ENCODE measurements at regions of chr18 and their contacts with region 1.

Region 1: DNA sequence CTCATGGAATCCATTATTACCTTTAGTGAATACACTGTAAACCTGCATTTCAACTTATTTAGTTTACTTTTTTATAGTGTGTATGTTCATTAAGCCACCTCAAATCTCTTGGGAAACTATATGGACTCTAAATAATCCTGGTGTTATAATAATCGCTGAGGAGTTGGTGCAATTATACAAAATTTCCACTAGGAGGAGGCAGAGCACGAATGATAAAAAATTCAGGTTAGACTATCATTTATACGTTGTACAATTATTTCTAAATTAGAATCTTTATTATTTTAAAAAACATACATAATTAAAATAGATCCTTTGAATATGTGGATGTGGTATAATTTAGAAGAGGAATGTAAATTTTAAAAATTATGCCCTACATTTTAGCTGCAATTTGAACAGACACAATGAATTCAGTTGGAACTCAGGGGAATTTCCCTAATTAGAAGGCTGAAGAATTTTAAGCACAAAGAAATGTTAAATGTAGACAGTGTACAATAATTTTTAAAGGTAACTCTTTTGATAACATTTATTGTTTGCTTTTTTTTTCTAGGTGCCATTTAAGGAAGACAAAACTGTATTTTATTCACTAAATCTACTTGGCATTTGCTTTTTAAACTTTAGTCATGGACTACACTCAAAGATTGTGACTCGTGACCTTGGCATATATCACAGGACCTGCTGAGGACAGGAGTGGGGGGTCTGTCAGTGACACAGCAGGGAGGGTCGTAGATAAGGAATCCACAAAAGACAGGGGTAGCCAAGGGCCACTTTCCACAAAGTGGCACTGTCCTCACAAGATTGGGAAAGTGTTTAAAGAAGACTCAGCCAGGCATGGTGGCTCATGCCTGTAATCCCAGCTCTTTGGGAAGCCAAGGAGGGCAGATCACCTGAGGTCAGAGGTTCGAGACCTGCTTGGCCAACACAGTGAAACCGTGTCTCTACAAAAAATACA is 45.5 kb downstream of the RAB12 start:
- DNase-seq: no peak
- ATAC-seq: peak; percentile 47; the same call in 1 of the 3 replicates
- H3K4me3 ChIP-seq: no peak overlapping the region
- H3K27ac ChIP-seq: no peak overlapping the region
- H3K4me1 ChIP-seq: no peaks in the 10 kb centered on the region
- H3K27me3 ChIP-seq: no peaks in the 10 kb centered on the region; a peak in 1 of 4 replicates
- CTCF ChIP-seq: peak; percentile 51 to 71 (median 70); a peak in 5 of 6 replicates
- EP300 ChIP-seq: no peak
- POLR2A ChIP-seq: no peak
- RAD21 ChIP-seq: peak; percentile 81

Region 2: DNA sequence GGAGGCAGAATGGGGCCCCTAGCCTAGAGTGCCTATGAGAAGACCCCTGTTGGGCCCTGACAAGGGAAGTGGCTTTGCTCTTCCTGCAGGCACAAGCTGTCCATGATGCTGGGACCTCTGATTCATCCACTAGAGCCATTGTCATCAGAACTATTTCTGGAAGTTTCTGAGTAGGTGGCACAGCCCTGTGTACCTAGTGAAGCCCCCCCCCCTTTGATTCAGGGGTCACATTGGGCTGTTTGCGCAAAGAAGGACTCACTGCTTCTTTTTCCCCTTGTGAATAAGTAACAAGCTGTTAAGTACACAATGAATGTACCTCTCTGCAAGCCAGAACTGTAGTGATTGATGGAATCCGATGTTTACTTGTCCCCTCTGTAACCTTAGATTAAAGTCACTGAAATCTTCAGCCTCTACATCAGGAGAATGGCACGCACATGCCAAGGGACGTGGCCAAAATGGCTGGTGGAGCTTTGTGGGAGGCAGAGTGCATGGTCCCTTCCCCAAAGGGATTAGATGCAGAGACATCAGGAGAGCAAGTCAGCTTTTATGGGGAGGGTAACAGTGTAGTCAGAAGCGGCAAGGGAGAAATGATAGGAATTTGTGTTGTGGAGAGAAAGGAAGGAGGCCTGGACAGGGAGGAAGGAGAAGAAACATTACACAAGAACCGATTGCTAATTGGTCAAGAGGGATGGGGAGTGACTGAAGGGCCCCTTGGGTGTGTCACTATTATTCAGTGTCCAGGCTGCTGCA is 313.1 kb before region 1 on chr18:
- CTCF ChIA-PET with region 1: no interaction called
- POLR2A ChIA-PET with region 1: no interaction called
- RAD21 ChIA-PET with region 1: no interaction called
- SMC1A ChIA-PET with region 1: no interaction called
- in situ Hi-C with region 1: no loop called
- intact Hi-C with region 1: no loop called
- DNase-seq: no peak
- ATAC-seq: no peak
- H3K4me3 ChIP-seq: no peak overlapping the region
- H3K27ac ChIP-seq: no peak overlapping the region
- H3K4me1 ChIP-seq: no peaks in the 10 kb centered on the region
- H3K27me3 ChIP-seq: no peaks in the 10 kb centered on the region; a peak in 1 of 4 replicates
- CTCF ChIP-seq: no peak
- EP300 ChIP-seq: no peak
- POLR2A ChIP-seq: no peak
- RAD21 ChIP-seq: no peak

Region 3: GRCh38 chr18:8643326-8643878 is 11.4 kb before region 1 on chr18:
- CTCF ChIA-PET with region 1: interaction called, 29 read pairs
- POLR2A ChIA-PET with region 1: interaction called, 5 read pairs
- RAD21 ChIA-PET with region 1: interaction called, 3 read pairs
- SMC1A ChIA-PET with region 1: interaction called, 6 read pairs
- in situ Hi-C with region 1: no loop called
- intact Hi-C with region 1: no loop called
- DNase-seq: no peak
- ATAC-seq: no peak
- H3K4me3 ChIP-seq: no peak overlapping the region
- H3K27ac ChIP-seq: no peak overlapping the region
- H3K4me1 ChIP-seq: no peaks in the 10 kb centered on the region
- H3K27me3 ChIP-seq: no peaks in the 10 kb centered on the region
- CTCF ChIP-seq: no peak
- EP300 ChIP-seq: no peak
- POLR2A ChIP-seq: no peak
- RAD21 ChIP-seq: no peak

Region 4: DNA sequence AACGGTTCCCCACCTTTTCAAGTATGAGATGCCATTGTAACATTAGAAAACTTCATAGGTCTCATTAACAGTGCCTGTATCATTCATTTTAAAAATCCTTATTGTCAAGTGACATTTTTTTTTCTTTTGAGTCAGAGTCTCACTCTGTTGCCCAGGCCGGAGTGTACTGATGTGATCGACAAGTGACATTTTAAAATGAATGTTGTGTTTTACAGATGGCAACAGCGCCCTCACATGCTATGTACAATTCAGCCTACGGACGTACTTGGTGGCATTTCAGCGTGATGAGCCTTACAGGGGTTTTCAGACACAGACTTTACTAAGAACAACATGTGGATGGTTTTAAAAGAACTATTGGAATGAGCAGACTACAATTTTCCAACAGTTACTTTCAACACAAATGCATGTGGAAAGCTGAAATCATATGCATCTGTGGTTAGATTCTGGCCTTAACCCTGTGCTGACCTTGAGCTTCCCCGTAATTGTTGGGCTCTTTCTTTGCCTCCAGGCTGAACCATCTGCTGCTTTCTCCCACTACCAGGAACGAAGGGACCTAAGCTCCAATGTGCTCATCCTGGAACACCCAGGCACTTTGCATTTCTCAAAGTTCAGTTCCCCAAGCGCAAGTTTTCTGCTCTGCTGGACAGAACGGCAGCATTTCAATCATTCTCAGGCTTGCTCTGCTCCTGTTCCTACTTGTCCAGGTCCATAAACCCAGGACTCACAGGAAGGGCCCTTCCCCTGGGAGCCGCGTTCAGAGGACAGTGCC is 327.8 kb after region 1 on chr18:
- CTCF ChIA-PET with region 1: interaction called, 62 read pairs
- POLR2A ChIA-PET with region 1: no interaction called
- RAD21 ChIA-PET with region 1: interaction called, 15 read pairs
- SMC1A ChIA-PET with region 1: interaction called, 27 read pairs
- in situ Hi-C with region 1: loop called (anchors 5 kb)
- intact Hi-C with region 1: no loop called
- DNase-seq: no peak
- ATAC-seq: peak; percentile 72
- H3K4me3 ChIP-seq: no peak overlapping the region
- H3K27ac ChIP-seq: no peak overlapping the region
- H3K4me1 ChIP-seq: no peaks in the 10 kb centered on the region
- H3K27me3 ChIP-seq: no peaks in the 10 kb centered on the region
- CTCF ChIP-seq: peak; percentile 21 to 66 (median 42); a peak in 4 of 6 replicates
- EP300 ChIP-seq: no peak
- POLR2A ChIP-seq: no peak
- RAD21 ChIP-seq: peak; percentile 75

Region 5: GRCh38 chr18:9048808-9049494 is 394.2 kb after region 1 on chr18:
- CTCF ChIA-PET with region 1: no interaction called
- POLR2A ChIA-PET with region 1: no interaction called
- RAD21 ChIA-PET with region 1: no interaction called
- SMC1A ChIA-PET with region 1: no interaction called
- in situ Hi-C with region 1: no loop called
- intact Hi-C with region 1: no loop called
- DNase-seq: no peak
- ATAC-seq: peak; percentile 60
- H3K4me3 ChIP-seq: no peak overlapping the region
- H3K27ac ChIP-seq: no peak overlapping the region
- H3K4me1 ChIP-seq: no peaks in the 10 kb centered on the region
- H3K27me3 ChIP-seq: no peaks in the 10 kb centered on the region
- CTCF ChIP-seq: no peak
- EP300 ChIP-seq: no peak
- POLR2A ChIP-seq: no peak
- RAD21 ChIP-seq: no peak

Region 6: DNA sequence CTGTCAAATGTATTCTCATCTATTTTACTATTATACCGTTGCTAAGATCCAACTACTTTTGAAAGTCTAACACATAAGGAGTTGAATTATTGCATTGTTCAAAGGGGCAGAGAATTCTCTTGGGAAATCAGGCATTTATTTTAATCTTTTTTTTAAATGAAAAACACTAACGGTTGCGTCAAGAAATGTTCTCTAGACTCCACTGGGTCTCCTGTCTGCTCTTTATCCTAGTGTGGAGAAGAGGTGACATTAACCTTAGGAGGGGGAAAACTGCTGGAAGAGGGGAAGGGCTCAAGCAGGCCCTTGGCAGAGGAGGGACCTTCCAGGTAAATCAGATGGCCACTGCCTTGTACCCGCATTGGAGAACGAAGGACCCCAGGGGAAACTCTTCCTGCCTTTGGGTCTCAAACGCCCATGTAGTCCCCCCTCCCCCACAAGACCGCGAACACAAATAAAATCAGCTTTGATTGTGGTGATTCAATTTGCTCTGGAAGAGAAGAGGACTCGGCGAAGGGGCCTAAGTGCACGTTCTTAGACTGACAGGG is 1798.6 kb after region 1 on chr18:
- CTCF ChIA-PET with region 1: no interaction called
- POLR2A ChIA-PET with region 1: no interaction called
- RAD21 ChIA-PET with region 1: no interaction called
- SMC1A ChIA-PET with region 1: no interaction called
- in situ Hi-C with region 1: no loop called
- intact Hi-C with region 1: no loop called
- DNase-seq: no peak
- ATAC-seq: no peak
- H3K4me3 ChIP-seq: no peak overlapping the region
- H3K27ac ChIP-seq: no peak overlapping the region
- H3K4me1 ChIP-seq: no peaks in the 10 kb centered on the region
- H3K27me3 ChIP-seq: peaks cover 8 to 17% of the 10 kb centered on the region in 2 experiments
- CTCF ChIP-seq: no peak
- EP300 ChIP-seq: no peak
- POLR2A ChIP-seq: no peak
- RAD21 ChIP-seq: no peak